Activated B cell treated with CpG ODN at 0.5 μM for 24 hours (primary cell): ENCODE measurements at regions of chr22 and their contacts with region 1.

Region 1: GRCh38 chr22:41543854-41544670 is at the start of gene POLR3H:
- DNase-seq: peak; percentile 93
- ATAC-seq: peak; percentile 99
- H3K4me3 Mint-ChIP-seq: peak within 1 kb of the TSS; percentile 96
- H3K27ac Mint-ChIP-seq: peak within 1 kb of the TSS; percentile 86
- H3K4me1 Mint-ChIP-seq: peaks cover 43% of the 10 kb centered on the region
- H3K27me3 Mint-ChIP-seq: no peaks in the 10 kb centered on the region
- CTCF ChIP-seq: no peak
- total RNA-seq, gene POLR3H: 39.0 and 43.9 TPM in 2 replicates

Region 2: GRCh38 chr22:41589391-41590241 is 45.6 kb after region 1 on chr22 and contains the start of gene PMM1:
- CTCF ChIA-PET with region 1: interaction called, 6 read pairs
- POLR2A ChIA-PET with region 1: interaction called, 20 read pairs
- intact Hi-C with region 1: loop called (anchors 1 kb)
- DNase-seq: peak; percentile 98
- ATAC-seq: peak; percentile 98
- H3K4me3 Mint-ChIP-seq: peak within 1 kb of the TSS; percentile 91
- H3K27ac Mint-ChIP-seq: peak within 1 kb of the TSS; percentile 88
- H3K4me1 Mint-ChIP-seq: peaks cover 12% of the 10 kb centered on the region
- H3K27me3 Mint-ChIP-seq: no peaks in the 10 kb centered on the region
- CTCF ChIP-seq: no peak
- total RNA-seq, gene PMM1: 13.0 and 15.1 TPM in 2 replicates